ENCODE measurements at regions of chr1 and their contacts with region 1.

Region 1: GRCh38 chr1:209601809-209602657 is 18.5 kb downstream of the CAMK1G start:
- DNase-seq: peak in 5 of 10 donors; percentile 51 to 92 (median 59)

Region 2: GRCh38 chr1:209627732-209628196 is 25.7 kb after region 1 on chr1:
- intact Hi-C with region 1: loop called (anchors 2 kb)
- DNase-seq: peak; percentile 71 to 97 (median 88)

Region 3: GRCh38 chr1:209747580-209748262 is 145.7 kb after region 1 on chr1:
- intact Hi-C with region 1: loop called (anchors 1 kb)
- DNase-seq: peak; percentile 61 to 97 (median 78)

Region 4: GRCh38 chr1:210185063-210185462 is 583.0 kb after region 1 on chr1:
- intact Hi-C with region 1: no loop called
- DNase-seq: no peak